PC-3 (cell line): ENCODE measurements at regions of chr9 and their contacts with region 1.

Region 1: DNA sequence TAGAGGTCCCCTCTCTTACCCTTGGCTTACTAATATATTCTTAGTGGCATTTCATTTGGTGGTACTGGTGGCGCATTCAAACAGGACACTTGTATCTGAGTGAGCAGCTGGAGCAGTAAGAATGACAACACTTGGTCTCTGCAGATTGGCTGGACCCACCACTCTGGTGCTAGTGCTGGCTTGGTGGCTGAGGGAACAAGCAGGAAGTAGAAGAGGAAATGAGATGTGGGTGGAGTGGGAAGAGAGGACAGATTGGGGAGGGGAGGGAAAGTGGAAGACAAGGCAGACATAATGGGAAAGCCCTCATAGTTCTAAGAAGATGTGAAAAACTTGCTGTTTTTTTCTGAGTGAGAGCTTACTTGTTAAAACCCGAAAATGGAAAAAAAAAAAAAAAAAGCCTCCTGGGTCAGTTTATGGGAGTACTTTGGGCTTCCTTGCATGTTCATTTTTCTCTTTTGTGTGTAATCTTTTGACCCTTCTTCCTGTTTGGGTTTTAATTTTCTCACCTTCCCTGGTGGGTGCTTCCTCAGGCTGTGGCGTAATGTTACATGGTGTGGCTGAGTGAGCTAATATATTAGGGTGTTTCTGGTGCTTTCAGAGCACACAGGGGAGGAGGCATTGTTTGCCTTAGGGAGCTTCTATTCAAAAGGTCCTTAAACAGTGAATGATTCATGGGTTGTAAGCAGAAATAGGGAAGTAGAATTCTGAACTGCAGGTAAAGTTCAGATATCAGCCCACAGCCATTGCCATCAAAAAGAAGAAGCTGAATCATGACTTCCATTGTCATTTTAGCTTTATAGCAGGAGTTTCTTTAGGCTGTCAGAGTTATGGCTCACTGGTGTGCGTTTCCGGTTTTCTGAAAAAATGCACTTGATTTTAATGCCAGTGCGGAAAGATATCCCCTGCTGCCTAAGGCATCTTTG is 52.3 kb downstream of the TLE4 start:
- DNase-seq: peak; percentile 69
- ATAC-seq: peak; percentile 87
- H3K4me3 ChIP-seq: no peak overlapping the region
- H3K27ac ChIP-seq: peak overlapping the region; percentile 82
- H3K4me1 ChIP-seq: peaks cover 24% of the 10 kb centered on the region
- H3K27me3 ChIP-seq: no peaks in the 10 kb centered on the region
- CTCF ChIP-seq: no peak

Region 2: GRCh38 chr9:79577969-79578723 is 45.9 kb before region 1 on chr9:
- CTCF ChIA-PET with region 1: no interaction called
- POLR2A ChIA-PET with region 1: interaction called, 10 read pairs
- intact Hi-C with region 1: loop called (anchors 5 kb)
- DNase-seq: no peak
- ATAC-seq: no peak
- H3K4me3 ChIP-seq: no peak overlapping the region
- H3K27ac ChIP-seq: no peak overlapping the region
- H3K4me1 ChIP-seq: peaks cover 21% of the 10 kb centered on the region
- H3K27me3 ChIP-seq: no peaks in the 10 kb centered on the region
- CTCF ChIP-seq: no peak

Region 3: DNA sequence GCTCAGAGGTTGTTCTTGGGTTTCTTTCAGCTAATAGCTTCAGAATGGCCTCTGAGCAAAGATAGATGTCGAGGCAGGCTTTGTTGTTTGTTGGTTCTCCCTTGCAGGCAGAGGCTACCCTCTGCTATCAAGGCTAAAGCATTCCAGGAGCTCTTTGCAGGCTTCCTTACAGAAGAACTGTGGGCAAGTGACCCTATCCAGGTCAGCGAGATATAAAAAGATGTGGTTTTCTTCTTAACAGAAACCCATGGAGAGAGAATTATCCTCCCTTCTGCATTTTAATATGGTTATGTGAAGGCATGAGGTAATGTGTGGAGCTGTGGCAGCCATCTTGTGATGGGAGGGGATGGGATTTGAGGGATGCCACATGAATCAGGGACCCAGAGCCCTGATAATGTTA is 14.7 kb after region 1 on chr9:
- CTCF ChIA-PET with region 1: no interaction called
- POLR2A ChIA-PET with region 1: interaction called, 11 read pairs
- intact Hi-C with region 1: no loop called
- DNase-seq: no peak
- ATAC-seq: no peak
- H3K4me3 ChIP-seq: no peak overlapping the region
- H3K27ac ChIP-seq: no peak overlapping the region
- H3K4me1 ChIP-seq: peaks cover 9% of the 10 kb centered on the region; the same call in 1 of the 2 replicates
- H3K27me3 ChIP-seq: no peaks in the 10 kb centered on the region
- CTCF ChIP-seq: no peak

Region 4: DNA sequence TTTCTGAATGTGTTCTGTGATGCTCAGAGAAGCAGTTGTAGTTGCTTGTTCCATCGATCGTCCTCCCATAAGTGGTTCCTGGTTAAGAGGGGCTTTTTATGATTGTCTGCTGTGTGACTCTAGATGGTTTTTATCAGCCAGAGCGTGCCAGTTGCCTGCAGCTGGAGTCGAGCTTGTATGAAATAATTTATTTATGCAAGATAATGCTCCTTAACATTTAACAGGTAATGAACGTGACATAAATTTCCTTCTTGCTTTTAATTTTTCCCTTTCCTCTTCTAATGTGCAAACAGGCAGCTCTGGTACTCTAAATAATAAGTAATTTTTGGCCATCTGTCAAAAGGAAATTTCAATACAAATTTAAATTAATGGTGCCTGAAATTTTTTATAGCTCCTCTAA is 32.1 kb after region 1 on chr9:
- CTCF ChIA-PET with region 1: no interaction called
- POLR2A ChIA-PET with region 1: interaction called, 16 read pairs
- intact Hi-C with region 1: no loop called
- DNase-seq: no peak
- ATAC-seq: no peak
- H3K4me3 ChIP-seq: no peak overlapping the region
- H3K27ac ChIP-seq: no peak overlapping the region
- H3K4me1 ChIP-seq: peaks cover 4% of the 10 kb centered on the region
- H3K27me3 ChIP-seq: no peaks in the 10 kb centered on the region
- CTCF ChIP-seq: no peak

Region 5: GRCh38 chr9:79667749-79668454 is 43.8 kb after region 1 on chr9:
- CTCF ChIA-PET with region 1: no interaction called
- POLR2A ChIA-PET with region 1: interaction called, 7 read pairs
- intact Hi-C with region 1: loop called (anchors 2 kb)
- DNase-seq: peak; percentile 72
- ATAC-seq: peak; percentile 20
- H3K4me3 ChIP-seq: peak overlapping the region; percentile 4; the same call in 1 of the 2 replicates
- H3K27ac ChIP-seq: peak overlapping the region; percentile 97
- H3K4me1 ChIP-seq: peaks cover 63% of the 10 kb centered on the region
- H3K27me3 ChIP-seq: no peaks in the 10 kb centered on the region
- CTCF ChIP-seq: no peak

Region 6: DNA sequence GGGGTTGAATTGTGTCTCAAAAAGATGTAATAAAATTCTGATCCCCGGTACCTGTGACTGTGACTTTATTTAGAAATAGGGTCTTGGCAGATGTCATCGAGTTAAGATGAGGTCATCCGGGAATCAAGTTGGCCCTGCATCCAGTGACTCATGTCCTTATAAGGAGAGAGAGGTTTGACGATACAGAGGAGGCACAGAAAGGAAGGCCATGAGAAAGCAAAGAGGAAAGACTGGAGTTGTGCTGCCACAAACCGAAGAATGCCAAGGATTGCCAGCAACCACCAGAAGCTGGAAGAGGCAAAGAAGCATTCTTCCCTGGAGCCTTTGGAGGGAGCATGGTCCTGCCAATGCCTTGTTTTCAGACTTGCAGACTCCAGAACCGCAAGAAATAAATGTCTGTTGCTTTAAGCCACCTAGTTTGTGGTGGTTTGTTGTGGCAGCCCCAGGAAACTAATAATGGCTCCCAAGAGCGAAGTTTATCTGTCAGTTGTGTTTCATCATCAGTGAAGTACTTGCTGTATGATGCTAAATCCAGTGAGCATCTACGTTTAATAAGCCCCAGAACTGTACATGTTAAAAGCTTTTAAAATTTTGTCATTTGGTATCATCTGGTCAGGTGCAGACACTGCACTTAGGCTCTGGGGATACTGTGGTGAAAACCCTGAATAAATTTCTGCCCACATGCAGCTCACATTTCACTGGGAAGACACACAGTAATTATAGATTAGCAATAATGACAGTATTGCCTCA is 62.5 kb after region 1 on chr9:
- CTCF ChIA-PET with region 1: no interaction called
- POLR2A ChIA-PET with region 1: no interaction called
- intact Hi-C with region 1: no loop called
- DNase-seq: peak; percentile 35
- ATAC-seq: no peak
- H3K4me3 ChIP-seq: no peak overlapping the region
- H3K27ac ChIP-seq: no peak overlapping the region
- H3K4me1 ChIP-seq: no peaks in the 10 kb centered on the region; the same call in 1 of the 2 replicates
- H3K27me3 ChIP-seq: no peaks in the 10 kb centered on the region
- CTCF ChIP-seq: no peak

Region 7: GRCh38 chr9:79817438-79818004 is 193.5 kb after region 1 on chr9:
- CTCF ChIA-PET with region 1: no interaction called
- POLR2A ChIA-PET with region 1: no interaction called
- intact Hi-C with region 1: no loop called
- DNase-seq: no peak
- ATAC-seq: no peak
- H3K4me3 ChIP-seq: no peak overlapping the region
- H3K27ac ChIP-seq: no peak overlapping the region
- H3K4me1 ChIP-seq: peaks cover 2% of the 10 kb centered on the region
- H3K27me3 ChIP-seq: no peaks in the 10 kb centered on the region
- CTCF ChIP-seq: no peak

Region 8: GRCh38 chr9:79989079-79989478 is 365.0 kb after region 1 on chr9:
- CTCF ChIA-PET with region 1: no interaction called
- POLR2A ChIA-PET with region 1: no interaction called
- intact Hi-C with region 1: no loop called
- DNase-seq: no peak
- ATAC-seq: no peak
- H3K4me3 ChIP-seq: no peak overlapping the region
- H3K27ac ChIP-seq: no peak overlapping the region
- H3K4me1 ChIP-seq: no peaks in the 10 kb centered on the region
- H3K27me3 ChIP-seq: no peaks in the 10 kb centered on the region
- CTCF ChIP-seq: no peak